ENCODE measurements at regions of chr5 and their contacts with region 1.

Region 1: DNA sequence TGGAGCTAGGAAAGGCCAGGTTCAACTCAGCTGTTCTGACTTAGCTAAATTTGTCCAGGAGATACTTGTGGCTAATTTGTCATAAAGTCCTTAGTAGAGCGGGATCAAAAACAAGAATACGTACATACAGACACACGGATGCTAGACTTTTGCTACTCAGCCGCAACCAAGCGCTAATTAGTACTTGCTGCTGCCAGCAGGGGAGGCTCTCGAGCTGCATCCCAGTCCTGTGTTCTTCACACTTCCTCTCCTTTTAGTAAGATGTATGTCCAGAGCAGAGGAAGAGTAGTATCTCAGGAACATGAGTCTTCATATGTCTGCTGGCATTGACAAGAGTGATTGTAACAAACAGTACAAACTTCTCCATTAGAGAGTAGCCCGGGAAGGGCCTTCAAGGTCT is 58.3 kb downstream of the CYFIP2 start:
- DNase-seq: no peak
- ATAC-seq: no peak
- H3K4me3 ChIP-seq: no peak overlapping the region
- H3K27ac ChIP-seq: no peak overlapping the region
- H3K4me1 ChIP-seq: peaks cover 0 to 11% (median 0%) of the 10 kb centered on the region in 4 donors
- H3K27me3 ChIP-seq: no peaks in the 10 kb centered on the region
- CTCF ChIP-seq: no peak
- POLR2A ChIP-seq: no peak

Region 2: DNA sequence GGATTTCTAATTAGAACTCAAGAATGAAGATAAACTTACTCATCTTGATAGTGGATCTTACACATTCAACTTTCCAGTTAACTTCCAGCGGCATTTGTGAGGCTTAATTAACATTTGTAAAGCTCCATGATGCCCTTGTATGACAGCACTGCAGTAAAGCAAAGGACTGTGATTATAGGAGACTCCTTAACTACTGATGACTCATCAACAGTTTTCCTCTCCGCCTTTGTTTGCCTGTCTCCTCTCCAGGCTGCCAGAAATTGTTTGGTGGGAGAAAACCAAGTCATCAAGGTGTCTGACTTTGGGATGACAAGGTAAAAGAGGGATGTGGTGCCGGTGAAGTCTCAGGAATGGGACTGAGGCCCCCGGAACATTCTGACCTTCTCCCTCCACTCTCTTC is 78.8 kb before region 1 on chr5:
- intact Hi-C with region 1: loop called in 1 of 2 experiments (anchors 5 kb)
- DNase-seq: no peak
- ATAC-seq: no peak
- H3K4me3 ChIP-seq: no peak overlapping the region
- H3K27ac ChIP-seq: no peak overlapping the region
- H3K4me1 ChIP-seq: no peaks in the 10 kb centered on the region
- H3K27me3 ChIP-seq: no peaks in the 10 kb centered on the region
- CTCF ChIP-seq: no peak
- POLR2A ChIP-seq: no peak